ENCODE measurements at regions of chr1 and their contacts with region 1.

Region 1: DNA sequence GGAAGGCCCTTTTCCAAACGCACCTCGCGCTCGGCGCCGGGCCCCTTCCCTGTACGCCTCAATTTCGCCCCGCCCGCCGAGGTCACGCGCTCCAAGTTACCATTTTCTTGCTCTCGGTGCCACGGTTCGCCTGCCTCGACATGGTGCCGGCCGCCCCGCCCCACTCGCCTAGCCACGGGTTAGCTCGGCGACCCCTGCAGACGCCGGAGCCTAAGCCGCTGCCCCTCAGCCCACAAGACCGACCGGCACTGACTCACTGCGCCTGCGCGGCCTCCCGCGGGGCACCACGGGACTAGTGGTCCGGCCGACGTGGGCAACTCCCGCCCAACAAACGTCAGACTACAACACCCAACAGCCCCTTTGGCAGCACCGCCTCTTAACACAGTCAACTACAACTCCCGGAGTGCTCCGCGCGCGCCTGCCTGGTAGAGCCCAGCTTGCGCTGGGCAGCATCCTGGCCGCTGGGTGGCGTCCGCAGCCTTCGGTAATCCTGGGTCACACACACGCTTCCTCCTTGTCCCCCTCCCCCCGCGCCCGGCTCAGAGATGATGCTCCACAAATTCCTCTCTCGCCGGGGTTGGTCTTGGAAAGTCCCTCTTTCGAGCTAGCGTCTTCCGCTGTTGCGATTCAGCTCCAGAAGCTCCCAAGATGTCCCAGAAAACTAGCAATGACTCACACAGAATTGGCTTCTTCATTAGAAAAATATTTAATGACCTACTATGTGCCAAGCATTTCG is at the start of gene TRAPPC3:
- DNase-seq: peak; percentile 100
- H3K4me3 ChIP-seq: peak within 1 kb of the TSS; percentile 64 to 84 (median 67)
- H3K27ac ChIP-seq: peak within 1 kb of the TSS; percentile 99
- H3K4me1 ChIP-seq: peaks cover 25% of the 10 kb centered on the region
- H3K27me3 ChIP-seq: no peaks in the 10 kb centered on the region
- CTCF ChIP-seq: peak; percentile 89 to 98
- total RNA-seq, gene TRAPPC3: 73.2 to 96.5 TPM

Region 2: DNA sequence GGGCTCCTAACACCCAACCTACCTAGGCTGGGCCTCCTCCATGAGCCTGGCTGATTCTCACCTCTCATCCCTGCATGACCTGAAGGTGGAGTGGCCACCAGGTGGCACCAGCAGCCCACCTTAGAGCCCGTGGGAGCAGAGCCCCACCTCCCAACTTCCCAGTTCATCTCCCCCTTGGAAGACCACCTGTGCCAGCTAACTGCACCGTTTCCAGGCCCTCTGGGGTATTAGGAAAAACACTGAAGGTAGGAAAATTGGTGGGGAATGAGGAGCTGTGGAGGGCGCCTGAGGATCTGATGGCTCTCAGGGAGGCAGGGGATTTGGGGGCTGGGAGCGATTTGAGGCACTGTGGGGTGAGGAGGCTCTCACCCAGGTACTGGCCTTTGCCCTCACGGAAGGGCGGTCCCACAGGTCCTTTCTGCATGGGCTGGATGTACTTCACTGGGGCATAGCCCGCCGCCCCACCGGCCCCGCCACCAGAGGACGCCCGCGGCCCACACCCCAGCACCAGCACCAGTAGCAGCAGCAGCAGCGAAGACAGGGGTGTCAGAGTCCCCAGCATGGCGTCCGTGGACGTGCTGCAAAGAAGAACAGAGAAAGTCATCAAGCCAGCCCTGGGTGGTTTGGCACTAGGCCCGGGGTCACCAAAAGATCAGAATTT is 49.6 kb before region 1 on chr1:
- CTCF ChIA-PET with region 1: no interaction called
- dilution Hi-C with region 1: no loop called
- in situ Hi-C with region 1: no loop called
- intact Hi-C with region 1: loop called (anchors 1 kb)
- DNase-seq: peak; percentile 49
- H3K4me3 ChIP-seq: no peak overlapping the region
- H3K27ac ChIP-seq: no peak overlapping the region
- H3K4me1 ChIP-seq: peaks cover 4% of the 10 kb centered on the region
- H3K27me3 ChIP-seq: no peaks in the 10 kb centered on the region
- CTCF ChIP-seq: peak; percentile 86 to 96

Region 3: GRCh38 chr1:36172983-36173382 is 23.6 kb after region 1 on chr1:
- CTCF ChIA-PET with region 1: interaction called, 5 read pairs
- dilution Hi-C with region 1: no loop called
- in situ Hi-C with region 1: no loop called
- intact Hi-C with region 1: loop called (anchors 1 kb)
- DNase-seq: peak; percentile 96
- H3K4me3 ChIP-seq: no peak overlapping the region
- H3K27ac ChIP-seq: peak overlapping the region; percentile 86
- H3K4me1 ChIP-seq: peaks cover 59% of the 10 kb centered on the region
- H3K27me3 ChIP-seq: no peaks in the 10 kb centered on the region
- CTCF ChIP-seq: no peak

Region 4: DNA sequence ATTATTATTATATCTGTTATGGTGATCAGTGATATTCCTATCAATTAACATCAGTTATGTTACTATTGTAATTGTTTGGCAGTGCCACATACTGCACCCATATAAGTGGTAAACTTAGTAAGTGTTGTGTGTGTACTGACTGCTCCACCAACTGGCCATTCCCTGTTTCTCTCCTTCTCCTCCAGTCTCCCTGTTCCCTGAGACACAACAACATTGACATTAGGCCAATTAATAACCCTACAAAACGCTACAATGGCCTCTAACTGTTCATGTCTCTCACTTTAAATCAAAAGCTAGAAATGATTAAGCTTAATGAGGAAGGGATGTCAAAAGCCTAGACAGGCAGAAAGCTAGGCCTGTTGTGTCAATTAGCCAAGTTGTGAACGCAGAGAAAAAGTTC is 68.3 kb after region 1 on chr1:
- CTCF ChIA-PET with region 1: no interaction called
- dilution Hi-C with region 1: loop called (anchors 5 kb)
- in situ Hi-C with region 1: no loop called
- intact Hi-C with region 1: loop called (anchors 1 kb)
- DNase-seq: peak; percentile 27
- H3K4me3 ChIP-seq: no peak overlapping the region
- H3K27ac ChIP-seq: no peak overlapping the region
- H3K4me1 ChIP-seq: peaks cover under 1% of the 10 kb centered on the region
- H3K27me3 ChIP-seq: no peaks in the 10 kb centered on the region
- CTCF ChIP-seq: peak in 1 of 2 donors; percentile 44

Region 5: GRCh38 chr1:36285448-36286101 is 136.2 kb after region 1 on chr1:
- CTCF ChIA-PET with region 1: interaction called, 9 read pairs
- dilution Hi-C with region 1: no loop called
- in situ Hi-C with region 1: no loop called
- intact Hi-C with region 1: loop called (anchors 1 kb)
- DNase-seq: peak; percentile 68
- H3K4me3 ChIP-seq: no peak overlapping the region
- H3K27ac ChIP-seq: no peak overlapping the region
- H3K4me1 ChIP-seq: no peaks in the 10 kb centered on the region
- H3K27me3 ChIP-seq: no peaks in the 10 kb centered on the region
- CTCF ChIP-seq: peak; percentile 60 to 70

Region 6: DNA sequence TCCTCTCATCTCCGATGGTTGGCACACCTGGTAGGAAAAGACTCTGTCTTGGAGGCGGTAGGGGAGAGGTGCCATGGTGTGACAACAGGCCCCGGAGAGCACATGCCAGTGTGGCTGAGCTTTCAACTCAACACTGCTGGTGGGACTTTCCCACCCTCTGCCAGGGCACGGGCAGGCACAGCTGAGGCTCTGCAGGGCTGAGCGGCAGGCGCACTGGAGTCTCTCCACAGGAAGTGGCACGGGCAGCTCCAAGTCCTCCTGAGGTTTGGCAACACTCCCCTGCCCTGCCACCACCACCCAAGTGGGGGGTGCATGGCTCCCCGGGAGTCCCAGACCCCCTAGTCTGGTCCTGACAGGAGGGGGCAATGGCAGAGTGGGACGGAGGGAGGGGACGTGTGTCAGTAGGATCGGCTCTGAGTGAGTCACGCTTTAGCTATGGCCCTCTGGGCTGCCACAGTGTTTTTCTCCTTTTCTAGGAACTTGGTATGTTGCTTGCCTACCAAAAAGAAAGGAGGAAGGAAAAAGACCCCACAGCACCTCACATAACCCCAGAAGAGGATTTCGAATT is 201.3 kb after region 1 on chr1:
- CTCF ChIA-PET with region 1: no interaction called
- dilution Hi-C with region 1: no loop called
- in situ Hi-C with region 1: no loop called
- intact Hi-C with region 1: loop called (anchors 2 kb)
- DNase-seq: peak; percentile 74
- H3K4me3 ChIP-seq: no peak overlapping the region
- H3K27ac ChIP-seq: peak overlapping the region; percentile 87
- H3K4me1 ChIP-seq: peaks cover 52% of the 10 kb centered on the region
- H3K27me3 ChIP-seq: no peaks in the 10 kb centered on the region
- CTCF ChIP-seq: no peak

Region 7: GRCh38 chr1:36420836-36421664 is 271.6 kb after region 1 on chr1:
- CTCF ChIA-PET with region 1: no interaction called
- dilution Hi-C with region 1: no loop called
- in situ Hi-C with region 1: no loop called
- intact Hi-C with region 1: loop called (anchors 1 kb)
- DNase-seq: peak; percentile 76
- H3K4me3 ChIP-seq: no peak overlapping the region
- H3K27ac ChIP-seq: peak overlapping the region; percentile 49
- H3K4me1 ChIP-seq: peaks cover 18% of the 10 kb centered on the region
- H3K27me3 ChIP-seq: no peaks in the 10 kb centered on the region
- CTCF ChIP-seq: peak; percentile 86 to 97